ENCODE measurements at regions of chr19 and their contacts with region 1.

Region 1: GRCh38 chr19:17336872-17337722 is at the start of gene GTPBP3:
- DNase-seq: peak; percentile 95 to 98 (median 97)
- ATAC-seq: peak; percentile 90 to 96 (median 94)
- H3K4me3 ChIP-seq: peak within 1 kb of the TSS; percentile 45 to 96 (median 76)
- H3K27ac ChIP-seq: peak within 1 kb of the TSS; percentile 76 to 97 (median 92)
- H3K4me1 ChIP-seq: peaks cover 0 to 40% (median 28%) of the 10 kb centered on the region in 12 donors
- H3K27me3 ChIP-seq: no peaks in the 10 kb centered on the region
- CTCF ChIP-seq: no peak
- POLR2A ChIP-seq: peak in 1 of 2 donors; percentile 8
- total RNA-seq, gene GTPBP3: 6.3 to 20.1 (median 11.3) TPM

Region 2: GRCh38 chr19:17266975-17267788 is 69.9 kb before region 1 on chr19 and contains the start of gene BABAM1:
- intact Hi-C with region 1: loop called in 1 of 10 experiments (anchors 2 kb)
- DNase-seq: peak; percentile 94 to 98 (median 97)
- ATAC-seq: peak; percentile 96 to 98 (median 97)
- H3K4me3 ChIP-seq: peak within 1 kb of the TSS; percentile 58 to 96 (median 80)
- H3K27ac ChIP-seq: peak within 1 kb of the TSS in 11 of 12 donors; percentile 62 to 96 (median 76)
- H3K4me1 ChIP-seq: peaks cover 0 to 23% (median 15%) of the 10 kb centered on the region in 12 donors
- H3K27me3 ChIP-seq: no peaks in the 10 kb centered on the region
- CTCF ChIP-seq: no peak
- POLR2A ChIP-seq: peak in 1 of 2 donors; percentile 46
- total RNA-seq, gene BABAM1: 60.9 to 92.4 (median 75.9) TPM

Region 3: DNA sequence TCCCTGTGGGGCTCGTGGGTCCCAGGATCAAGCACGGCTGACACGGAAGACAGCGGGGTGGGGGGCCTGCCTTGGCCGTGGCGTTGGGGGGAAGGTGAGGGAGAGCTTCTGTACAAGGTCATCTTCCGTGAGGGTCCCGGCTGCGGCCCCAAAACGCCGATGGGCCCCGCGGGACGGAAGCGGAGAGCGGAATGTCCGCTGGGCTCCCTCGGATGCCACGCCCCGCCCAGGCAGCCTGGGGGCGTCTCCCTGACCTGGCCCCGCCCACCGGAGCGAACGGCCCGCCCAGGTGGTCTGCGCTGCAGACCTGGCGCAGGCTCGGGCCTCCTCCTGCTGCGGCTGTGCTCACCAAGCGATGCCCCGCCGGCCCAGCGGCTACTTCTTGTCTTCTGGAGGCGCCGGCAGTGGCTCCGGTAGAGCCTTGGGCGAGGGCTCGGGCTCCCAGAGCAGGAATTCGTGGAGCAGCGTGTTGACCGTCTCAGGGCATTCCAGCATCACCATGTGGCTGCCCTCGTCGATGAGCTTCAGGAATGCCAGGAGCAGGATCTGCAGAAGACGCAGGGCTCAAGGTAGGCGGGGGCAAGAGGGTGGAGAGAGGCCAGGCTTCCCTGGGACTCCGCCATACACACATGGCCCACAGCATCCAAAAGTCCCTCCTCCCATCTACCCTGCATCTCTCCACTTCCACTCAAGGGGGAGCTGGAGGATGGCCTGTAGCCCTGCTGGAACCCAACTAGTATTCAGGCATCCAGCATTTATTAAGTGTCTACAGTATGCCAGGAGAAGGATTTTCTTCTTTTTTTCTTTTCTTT is 44.6 kb before region 1 on chr19:
- intact Hi-C with region 1: loop called in 1 of 10 experiments (anchors 5 kb)
- DNase-seq: peak; percentile 68 to 84 (median 73)
- ATAC-seq: peak; percentile 66 to 92 (median 90)
- H3K4me3 ChIP-seq: peak overlapping the region; percentile 24 to 73 (median 56)
- H3K27ac ChIP-seq: peak overlapping the region in 6 of 12 donors; percentile 39 to 81 (median 45)
- H3K4me1 ChIP-seq: peaks cover 0 to 13% (median 0%) of the 10 kb centered on the region in 12 donors
- H3K27me3 ChIP-seq: no peaks in the 10 kb centered on the region
- CTCF ChIP-seq: peak; percentile 46 to 78 (median 62)
- POLR2A ChIP-seq: no peak

Region 4: GRCh38 chr19:17305517-17306284 is 31.4 kb before region 1 on chr19 and contains the start of gene MRPL34:
- intact Hi-C with region 1: loop called in 3 of 10 experiments (anchors 2 kb)
- DNase-seq: peak; percentile 92 to 98 (median 97)
- ATAC-seq: peak; percentile 56 to 77 (median 68)
- H3K4me3 ChIP-seq: peak within 1 kb of the TSS; percentile 55 to 88 (median 71)
- H3K27ac ChIP-seq: peak within 1 kb of the TSS; percentile 75 to 97 (median 95)
- H3K4me1 ChIP-seq: peaks cover 6 to 61% (median 44%) of the 10 kb centered on the region in 12 donors
- H3K27me3 ChIP-seq: no peaks in the 10 kb centered on the region
- CTCF ChIP-seq: peak; percentile 47 to 90 (median 66)
- POLR2A ChIP-seq: peak in 1 of 2 donors; percentile 84
- total RNA-seq, gene MRPL34: 97.8 to 389 (median 174) TPM

Region 5: GRCh38 chr19:17311455-17312248 is 25.4 kb before region 1 on chr19:
- intact Hi-C with region 1: loop called in 2 of 10 experiments (anchors 2 kb)
- DNase-seq: no peak
- ATAC-seq: no peak
- H3K4me3 ChIP-seq: no peak overlapping the region
- H3K27ac ChIP-seq: no peak overlapping the region
- H3K4me1 ChIP-seq: peaks cover 0 to 38% (median 22%) of the 10 kb centered on the region in 12 donors
- H3K27me3 ChIP-seq: no peaks in the 10 kb centered on the region
- CTCF ChIP-seq: no peak
- POLR2A ChIP-seq: no peak

Measured in heart left ventricle (tissue), 16 donors.